Ascending aorta (tissue), 2 donors: ENCODE measurements at regions of chr15 and their contacts with region 1.

Region 1: DNA sequence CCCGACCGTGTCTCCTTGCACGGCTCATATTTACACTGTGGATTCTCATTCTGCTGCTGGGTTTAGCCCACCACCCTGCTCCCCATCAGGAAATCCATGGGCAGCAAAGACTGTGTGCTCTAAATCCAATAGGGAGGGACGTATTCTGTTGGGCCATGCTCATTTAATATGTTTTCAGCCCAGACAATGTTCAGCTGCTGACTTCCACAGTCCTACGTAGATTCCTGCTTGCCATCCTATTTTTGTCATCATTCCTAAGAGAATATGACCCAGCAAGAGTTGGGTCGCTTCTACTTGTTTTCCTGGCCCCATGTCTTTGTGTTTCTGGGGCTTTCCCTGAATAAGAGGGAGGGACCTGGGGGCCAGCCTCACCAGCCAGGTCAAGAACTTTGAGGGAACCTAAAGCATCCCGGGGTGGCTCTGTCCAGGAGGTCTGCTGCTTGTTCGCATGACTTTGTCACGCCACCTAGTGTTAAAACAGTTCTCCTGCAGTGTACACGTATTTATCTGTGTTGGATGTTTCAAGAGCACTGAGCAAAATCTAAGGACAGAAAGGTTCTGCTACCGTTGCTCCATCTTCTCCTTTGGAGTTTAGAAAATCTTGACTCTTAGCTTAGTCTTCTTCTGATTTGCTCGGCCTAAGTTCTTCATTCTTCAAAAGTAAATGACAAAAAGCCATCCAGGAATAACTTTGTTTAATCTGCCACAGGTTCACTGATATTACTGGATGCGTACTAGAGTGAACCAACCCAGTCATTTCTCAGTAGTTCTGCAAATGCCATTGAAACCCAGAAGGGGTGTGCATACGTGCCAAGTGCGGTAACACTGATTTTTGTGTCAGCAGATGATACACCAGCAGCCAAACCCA is 79.8 kb upstream of the NR2E3 start:
- DNase-seq: peak in 1 of 2 donors; percentile 69
- H3K4me3 ChIP-seq: no peak overlapping the region
- H3K27ac ChIP-seq: peak overlapping the region; percentile 31 to 46
- H3K4me1 ChIP-seq: peaks cover 0 to 16% of the 10 kb centered on the region in 2 donors
- H3K27me3 ChIP-seq: no peaks in the 10 kb centered on the region
- CTCF ChIP-seq: peak; percentile 74 to 82 (median 80)

Region 2: DNA sequence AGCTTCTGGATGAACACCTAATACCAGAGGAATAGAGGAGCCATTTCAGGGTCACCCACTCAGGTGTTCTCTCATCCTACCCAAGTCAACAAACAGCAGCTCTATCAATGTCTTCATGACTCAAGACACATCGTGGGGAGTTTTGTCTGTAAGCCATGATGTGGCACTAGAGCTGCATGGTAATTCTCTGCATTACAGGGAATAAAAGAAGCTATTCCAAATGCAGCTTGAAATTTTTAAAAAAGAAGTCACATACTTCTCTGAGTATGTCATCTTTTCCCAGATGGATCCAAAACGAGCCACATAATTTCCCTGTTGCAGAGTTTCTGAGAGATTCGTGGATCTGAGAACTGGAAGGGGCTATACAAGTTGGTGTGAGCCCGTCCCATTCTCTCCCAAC is 621.4 kb before region 1 on chr15:
- intact Hi-C with region 1: loop called (anchors 5 kb)
- DNase-seq: no peak
- H3K4me3 ChIP-seq: no peak overlapping the region
- H3K27ac ChIP-seq: peak overlapping the region; percentile 51 to 66
- H3K4me1 ChIP-seq: peaks cover 0 to 11% of the 10 kb centered on the region in 2 donors
- H3K27me3 ChIP-seq: no peaks in the 10 kb centered on the region
- CTCF ChIP-seq: peak; percentile 32 to 38 (median 32)

Region 3: GRCh38 chr15:71448688-71449114 is 281.8 kb before region 1 on chr15:
- intact Hi-C with region 1: loop called (anchors 1 kb)
- DNase-seq: peak in 1 of 2 donors; percentile 70
- H3K4me3 ChIP-seq: no peak overlapping the region
- H3K27ac ChIP-seq: no peak overlapping the region
- H3K4me1 ChIP-seq: peaks cover 0 to 5% of the 10 kb centered on the region in 2 donors
- H3K27me3 ChIP-seq: no peaks in the 10 kb centered on the region
- CTCF ChIP-seq: peak; percentile 87 to 91 (median 88)

Region 4: DNA sequence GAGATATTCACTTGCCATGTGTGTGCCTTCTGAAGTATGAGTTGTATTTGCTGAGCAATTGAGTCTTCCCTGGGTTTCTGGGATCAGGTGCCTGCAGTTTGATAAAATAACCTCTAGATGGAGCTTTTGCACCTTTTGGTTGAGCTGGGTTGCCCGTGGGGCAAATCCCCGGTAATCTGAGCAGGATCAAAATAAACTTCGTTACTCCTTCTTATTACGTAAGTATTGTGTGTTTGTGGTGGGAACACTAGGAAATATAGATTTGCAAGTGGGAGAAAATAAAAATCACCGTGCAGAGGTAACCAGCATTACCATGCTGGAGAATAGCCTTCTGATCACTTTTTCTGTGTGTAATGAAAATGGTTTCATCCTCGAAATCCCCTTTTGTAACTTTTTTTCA is 197.5 kb before region 1 on chr15:
- intact Hi-C with region 1: loop called (anchors 2 kb)
- DNase-seq: no peak
- H3K4me3 ChIP-seq: no peak overlapping the region
- H3K27ac ChIP-seq: no peak overlapping the region
- H3K4me1 ChIP-seq: no peaks in the 10 kb centered on the region
- H3K27me3 ChIP-seq: no peaks in the 10 kb centered on the region
- CTCF ChIP-seq: peak in 2 of 3 experiments; percentile 35 to 54

Region 5: GRCh38 chr15:71562251-71562650 is 168.3 kb before region 1 on chr15:
- intact Hi-C with region 1: loop called (anchors 10 kb)
- DNase-seq: no peak
- H3K4me3 ChIP-seq: no peak overlapping the region
- H3K27ac ChIP-seq: no peak overlapping the region
- H3K4me1 ChIP-seq: no peaks in the 10 kb centered on the region
- H3K27me3 ChIP-seq: no peaks in the 10 kb centered on the region
- CTCF ChIP-seq: no peak

Region 6: GRCh38 chr15:71666763-71667620 is 63.5 kb before region 1 on chr15:
- intact Hi-C with region 1: no loop called
- DNase-seq: no peak
- H3K4me3 ChIP-seq: no peak overlapping the region
- H3K27ac ChIP-seq: no peak overlapping the region
- H3K4me1 ChIP-seq: peaks cover 0 to 3% of the 10 kb centered on the region in 2 donors
- H3K27me3 ChIP-seq: no peaks in the 10 kb centered on the region
- CTCF ChIP-seq: no peak

Region 7: GRCh38 chr15:73584699-73585420 is 1854.3 kb after region 1 on chr15:
- intact Hi-C with region 1: no loop called
- DNase-seq: no peak
- H3K4me3 ChIP-seq: no peak overlapping the region
- H3K27ac ChIP-seq: no peak overlapping the region
- H3K4me1 ChIP-seq: no peaks in the 10 kb centered on the region
- H3K27me3 ChIP-seq: no peaks in the 10 kb centered on the region
- CTCF ChIP-seq: no peak